Activated T-helper 2 cell treated with anti-CD3 and anti-CD28 coated beads, Interferon-gamma antibody, Interleukin-2, Interleukin-4, amounts not matched to agents 10 μg/mL and 5 μg/mL and 100 μg/mL, durations not matched to agents 14 hours and 24 hours and 36 hours (primary cell): ENCODE measurements at regions of chr18 and their contacts with region 1.

Region 1: DNA sequence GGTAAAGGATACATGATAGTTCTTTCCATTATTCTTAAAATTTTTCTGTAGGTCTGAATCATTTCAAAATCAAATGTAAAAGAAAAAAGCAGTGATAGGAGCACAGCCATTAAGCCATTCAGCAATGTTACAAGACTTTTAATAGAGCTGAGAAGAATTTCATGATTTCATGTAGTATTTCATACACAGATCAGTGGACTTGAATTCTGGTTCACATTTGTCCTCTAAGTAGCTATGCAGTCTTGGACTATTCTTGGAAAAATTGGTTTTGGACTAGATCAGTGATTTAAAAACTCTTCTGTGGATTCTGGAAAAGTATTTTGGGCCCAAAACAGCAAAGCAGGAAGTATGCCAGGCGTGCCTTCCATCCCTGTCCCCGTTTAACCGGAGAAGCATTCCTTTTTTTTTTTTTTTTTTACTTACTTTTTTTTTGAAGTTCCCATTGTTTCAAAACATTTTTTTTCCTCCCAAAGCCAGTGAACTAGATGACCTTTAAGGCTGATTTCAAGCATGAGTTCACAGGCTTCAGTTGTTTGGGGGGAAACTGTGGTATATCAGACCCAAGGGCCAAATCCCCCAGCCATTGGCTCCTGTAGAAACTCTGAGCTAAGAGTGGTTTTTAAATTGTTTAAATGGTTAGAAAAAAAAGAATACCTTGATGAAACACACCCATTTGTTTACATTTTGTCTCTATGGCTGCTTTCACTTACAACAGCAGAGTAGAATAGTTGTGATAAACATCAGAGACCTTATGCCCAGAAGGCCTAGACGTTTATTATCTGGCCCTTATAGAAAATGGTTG is 17.5 kb upstream of the POLI start:
- DNase-seq: no peak
- H3K4me3 Mint-ChIP-seq: no peak overlapping the region
- H3K27ac Mint-ChIP-seq: no peak overlapping the region
- H3K4me1 Mint-ChIP-seq: peaks cover 17% of the 10 kb centered on the region
- H3K27me3 Mint-ChIP-seq: peaks cover 3% of the 10 kb centered on the region

Region 2: DNA sequence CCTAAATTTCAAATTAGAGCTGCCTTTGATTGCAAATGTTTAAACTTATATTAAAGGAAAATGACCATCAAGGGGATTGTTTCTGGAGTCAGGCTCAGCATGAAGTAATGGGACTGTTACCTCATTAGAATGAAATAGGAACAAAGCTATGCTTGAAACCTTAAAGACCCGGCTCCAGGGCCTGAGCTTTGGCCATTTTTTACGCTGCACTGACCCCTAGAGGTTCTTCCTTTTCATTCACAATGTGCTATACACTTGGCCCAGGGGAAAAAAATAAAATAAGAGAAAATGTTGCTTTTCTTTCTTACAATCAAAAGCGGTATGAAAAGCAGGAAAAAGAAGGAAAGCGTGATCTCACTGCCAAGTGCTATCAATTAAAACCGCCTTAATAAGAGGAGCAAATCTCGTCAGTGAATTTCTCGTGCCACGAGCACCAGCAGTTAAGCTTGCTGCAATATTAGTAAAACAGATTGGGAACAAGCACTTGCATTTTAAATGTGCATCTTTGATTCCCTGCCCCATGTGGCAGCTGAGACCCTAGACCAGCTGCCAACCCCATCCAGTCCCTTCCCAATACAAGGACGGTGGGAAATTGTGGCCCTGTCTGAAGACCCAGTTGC is 123.9 kb before region 1 on chr18:
- intact Hi-C with region 1: no loop called
- DNase-seq: no peak
- H3K4me3 Mint-ChIP-seq: no peak overlapping the region
- H3K27ac Mint-ChIP-seq: no peak overlapping the region
- H3K4me1 Mint-ChIP-seq: peaks cover 17% of the 10 kb centered on the region
- H3K27me3 Mint-ChIP-seq: no peaks in the 10 kb centered on the region

Region 3: DNA sequence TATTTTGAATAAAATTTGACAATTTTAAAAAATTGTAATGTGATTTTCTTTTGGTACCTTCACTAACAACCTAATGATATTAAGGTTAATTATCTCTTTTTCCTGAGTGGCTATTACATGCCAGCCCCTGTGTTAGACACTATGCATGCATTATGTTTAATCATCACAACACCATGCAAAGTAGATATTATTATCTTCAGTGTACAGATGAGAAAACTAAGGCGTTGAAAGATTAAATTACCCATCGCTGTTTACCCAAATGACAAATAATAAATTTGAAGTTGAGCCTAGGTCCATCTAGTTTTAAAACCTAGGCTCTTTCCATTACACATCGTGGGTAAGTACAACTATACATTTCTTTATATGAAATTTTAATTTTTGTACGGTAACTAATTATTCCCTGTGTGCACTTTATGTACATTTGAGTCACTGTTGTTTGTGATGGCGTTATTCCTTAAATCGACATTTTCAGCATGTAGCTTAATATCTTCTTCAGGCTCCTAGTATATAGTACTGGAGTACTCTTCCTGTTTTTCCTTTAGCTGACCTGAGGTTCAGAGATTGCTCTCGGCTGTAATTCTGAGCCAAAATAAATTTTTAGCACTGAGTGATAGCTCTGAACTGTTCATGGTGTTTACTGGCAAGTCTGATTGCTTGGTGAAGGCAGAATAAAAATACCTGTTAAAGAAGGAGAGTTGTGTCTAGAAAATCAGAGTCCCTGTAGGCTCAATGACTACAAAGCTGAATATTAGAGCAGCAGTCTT is 13.5 kb before region 1 on chr18:
- intact Hi-C with region 1: loop called (anchors 2 kb)
- DNase-seq: no peak
- H3K4me3 Mint-ChIP-seq: no peak overlapping the region
- H3K27ac Mint-ChIP-seq: no peak overlapping the region
- H3K4me1 Mint-ChIP-seq: no peaks in the 10 kb centered on the region
- H3K27me3 Mint-ChIP-seq: peaks cover 16% of the 10 kb centered on the region